Prostate gland (tissue), 2 donors: ENCODE measurements at regions of chr2 and their contacts with region 1.

Region 1: GRCh38 chr2:72579591-72580180 is 246.1 kb downstream of the EXOC6B start:
- DNase-seq: no peak
- H3K4me3 ChIP-seq: no peak overlapping the region
- H3K27ac ChIP-seq: no peak overlapping the region
- H3K4me1 ChIP-seq: no peaks in the 10 kb centered on the region
- H3K27me3 ChIP-seq: no peaks in the 10 kb centered on the region
- CTCF ChIP-seq: peak; percentile 28 to 73 (median 64)
- POLR2A ChIP-seq: no peak

Region 2: GRCh38 chr2:71545572-71546274 is 1034.0 kb before region 1 on chr2:
- intact Hi-C with region 1: loop called (anchors 5 kb)
- DNase-seq: peak; percentile 56
- H3K4me3 ChIP-seq: no peak overlapping the region
- H3K27ac ChIP-seq: no peak overlapping the region
- H3K4me1 ChIP-seq: no peaks in the 10 kb centered on the region
- H3K27me3 ChIP-seq: no peaks in the 10 kb centered on the region
- CTCF ChIP-seq: peak; percentile 22 to 74 (median 64)
- POLR2A ChIP-seq: no peak

Region 3: GRCh38 chr2:71772510-71773172 is 807.0 kb before region 1 on chr2:
- intact Hi-C with region 1: no loop called
- DNase-seq: no peak
- H3K4me3 ChIP-seq: no peak overlapping the region
- H3K27ac ChIP-seq: no peak overlapping the region
- H3K4me1 ChIP-seq: no peaks in the 10 kb centered on the region
- H3K27me3 ChIP-seq: no peaks in the 10 kb centered on the region
- CTCF ChIP-seq: no peak
- POLR2A ChIP-seq: no peak

Region 4: DNA sequence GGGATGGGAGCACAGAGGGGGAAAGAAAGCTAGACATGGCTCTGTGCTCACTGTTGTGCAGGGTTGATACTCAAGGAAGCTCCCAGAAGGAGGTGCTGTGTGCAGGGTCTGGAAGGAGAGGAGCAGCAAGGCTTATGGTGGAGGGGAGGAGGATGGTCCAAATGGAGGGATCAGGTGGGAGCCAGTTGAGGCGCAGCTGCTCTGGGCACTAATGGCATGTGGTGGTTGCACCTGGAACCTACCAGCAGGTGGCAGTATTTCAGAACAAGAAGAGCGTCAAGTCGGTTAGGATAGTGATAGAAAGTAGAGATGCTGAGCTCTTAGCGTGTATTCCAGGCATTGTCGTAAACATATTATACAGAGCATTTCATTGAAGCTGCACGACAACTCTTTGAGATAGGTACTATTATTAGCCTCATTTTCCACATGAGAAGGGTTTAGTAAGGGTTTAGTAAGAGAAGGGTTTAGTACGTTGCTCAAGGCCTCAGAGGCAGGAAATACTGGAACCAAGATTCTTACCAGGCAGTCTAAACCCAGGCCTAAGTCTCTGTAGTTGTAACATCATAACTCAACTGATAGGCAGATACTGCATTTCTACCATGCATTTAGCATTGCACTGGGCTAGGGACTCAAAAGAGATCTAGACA is 655.7 kb before region 1 on chr2:
- intact Hi-C with region 1: loop called (anchors 5 kb)
- DNase-seq: peak; percentile 69
- H3K4me3 ChIP-seq: no peak overlapping the region
- H3K27ac ChIP-seq: no peak overlapping the region
- H3K4me1 ChIP-seq: no peaks in the 10 kb centered on the region
- H3K27me3 ChIP-seq: no peaks in the 10 kb centered on the region
- CTCF ChIP-seq: peak; percentile 56 to 94 (median 82)
- POLR2A ChIP-seq: no peak

Region 5: DNA sequence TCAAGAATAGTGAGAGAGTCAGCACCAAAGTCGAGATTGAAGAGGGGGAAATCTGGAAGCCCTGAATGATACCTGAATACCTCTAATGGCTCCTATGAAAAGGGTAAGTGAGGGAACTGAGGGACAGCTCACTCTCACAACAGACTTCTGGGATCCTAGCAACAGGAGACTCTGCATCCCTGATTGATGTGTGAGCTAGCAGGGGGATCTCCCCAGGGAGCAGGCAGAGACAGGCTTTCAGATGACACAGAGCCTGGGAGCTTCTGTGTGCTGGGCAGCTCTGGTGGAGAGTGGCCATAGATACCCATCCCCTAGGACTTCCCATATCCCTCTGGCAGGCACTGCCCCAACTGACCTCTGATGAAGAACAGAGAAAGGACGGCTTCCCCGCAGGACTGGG is 39.9 kb after region 1 on chr2:
- intact Hi-C with region 1: no loop called
- DNase-seq: no peak
- H3K4me3 ChIP-seq: no peak overlapping the region
- H3K27ac ChIP-seq: no peak overlapping the region
- H3K4me1 ChIP-seq: no peaks in the 10 kb centered on the region
- H3K27me3 ChIP-seq: no peaks in the 10 kb centered on the region
- CTCF ChIP-seq: no peak
- POLR2A ChIP-seq: no peak

Region 6: DNA sequence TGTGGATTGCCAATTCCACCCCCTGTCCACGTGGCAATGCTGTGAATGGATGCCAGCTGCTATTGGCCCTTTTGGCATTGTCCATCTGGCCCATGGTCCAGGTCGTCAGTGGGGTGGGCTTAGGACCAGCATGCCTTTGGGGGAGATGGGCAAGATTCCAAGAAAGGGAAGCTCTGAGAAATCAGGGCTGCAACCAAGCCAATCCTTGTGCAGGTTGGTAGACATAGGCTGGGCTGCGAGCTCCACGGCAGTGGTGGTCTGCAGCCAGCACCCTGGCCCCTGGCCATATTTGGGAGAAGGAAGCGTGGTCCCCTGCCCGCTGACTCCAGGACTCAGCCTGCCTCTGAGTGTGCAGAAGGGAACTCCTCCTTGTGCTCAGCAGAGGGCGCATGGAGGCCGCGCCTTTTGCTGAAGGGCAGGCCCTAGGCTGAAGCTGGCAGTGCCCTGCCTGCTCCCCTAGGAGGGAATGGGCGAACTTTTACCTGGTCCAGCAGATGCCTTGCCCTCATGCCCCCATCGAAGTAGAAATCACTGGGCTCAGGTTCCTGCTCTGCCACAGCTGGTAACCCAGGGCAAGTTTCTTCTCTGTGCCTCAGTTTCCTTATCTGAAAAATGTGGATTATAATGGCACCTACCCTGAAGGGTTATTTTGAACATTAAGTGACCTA is 313.0 kb after region 1 on chr2:
- intact Hi-C with region 1: no loop called
- DNase-seq: peak; percentile 51
- H3K4me3 ChIP-seq: no peak overlapping the region
- H3K27ac ChIP-seq: no peak overlapping the region
- H3K4me1 ChIP-seq: no peaks in the 10 kb centered on the region
- H3K27me3 ChIP-seq: no peaks in the 10 kb centered on the region
- CTCF ChIP-seq: peak; percentile 20 to 75 (median 58)
- POLR2A ChIP-seq: no peak